Body of pancreas (tissue), 4 donors: ENCODE measurements at regions of chr10 and their contacts with region 1.

Region 1: GRCh38 chr10:63866075-63866746 is 345.0 kb downstream of the REEP3 start:
- DNase-seq: peak; percentile 16 to 53 (median 45)
- ATAC-seq: peak; percentile 75
- H3K4me3 ChIP-seq: no peak overlapping the region
- H3K27ac ChIP-seq: no peak overlapping the region
- H3K4me1 ChIP-seq: peaks cover 5% of the 10 kb centered on the region
- H3K27me3 ChIP-seq: no peaks in the 10 kb centered on the region
- CTCF ChIP-seq: peak; percentile 56 to 83 (median 69)
- POLR2A ChIP-seq: no peak

Region 2: GRCh38 chr10:63633677-63634473 is 232.3 kb before region 1 on chr10:
- intact Hi-C with region 1: no loop called
- DNase-seq: peak in 3 of 4 donors; percentile 26 to 36 (median 30)
- ATAC-seq: no peak
- H3K4me3 ChIP-seq: no peak overlapping the region
- H3K27ac ChIP-seq: no peak overlapping the region
- H3K4me1 ChIP-seq: peaks cover 21% of the 10 kb centered on the region
- H3K27me3 ChIP-seq: no peaks in the 10 kb centered on the region
- CTCF ChIP-seq: peak in 6 of 7 experiments; percentile 14 to 46 (median 30)
- POLR2A ChIP-seq: no peak

Region 3: GRCh38 chr10:63670291-63670898 is 195.8 kb before region 1 on chr10:
- intact Hi-C with region 1: no loop called
- DNase-seq: no peak
- ATAC-seq: peak; percentile 47
- H3K4me3 ChIP-seq: no peak overlapping the region
- H3K27ac ChIP-seq: peak overlapping the region in 1 of 4 donors; percentile 8
- H3K4me1 ChIP-seq: peaks cover 9% of the 10 kb centered on the region
- H3K27me3 ChIP-seq: no peaks in the 10 kb centered on the region
- CTCF ChIP-seq: no peak
- POLR2A ChIP-seq: peak in 1 of 3 donors; percentile 10

Region 4: GRCh38 chr10:63976538-63976937 is 110.3 kb after region 1 on chr10:
- intact Hi-C with region 1: loop called (anchors 5 kb)
- DNase-seq: peak; percentile 29 to 67 (median 51)
- ATAC-seq: peak; percentile 68
- H3K4me3 ChIP-seq: no peak overlapping the region
- H3K27ac ChIP-seq: no peak overlapping the region
- H3K4me1 ChIP-seq: no peaks in the 10 kb centered on the region
- H3K27me3 ChIP-seq: no peaks in the 10 kb centered on the region
- CTCF ChIP-seq: peak; percentile 7 to 57 (median 50)
- POLR2A ChIP-seq: no peak